H1 (cell line): ENCODE measurements at regions of chr14 and their contacts with region 1.

Region 1: GRCh38 chr14:94748667-94749347 is 21.1 kb downstream of the GSC start:
- DNase-seq: peak in 1 of 2 experiments; percentile 75
- H3K4me3 ChIP-seq: no peak overlapping the region
- H3K27ac ChIP-seq: no peak overlapping the region
- H3K4me1 ChIP-seq: no peaks in the 10 kb centered on the region
- H3K27me3 ChIP-seq: no peaks in the 10 kb centered on the region
- CTCF ChIP-seq: peak; percentile 69 to 94 (median 84)
- EP300 ChIP-seq: no peak
- POLR2A ChIP-seq: no peak
- RAD21 ChIP-seq: peak; percentile 82 to 87

Region 2: GRCh38 chr14:94689218-94689984 is 59.4 kb before region 1 on chr14:
- CTCF ChIA-PET with region 1: interaction called, 40 read pairs
- POLR2A ChIA-PET with region 1: no interaction called
- DNase-seq: peak in 1 of 2 experiments; percentile 92
- H3K4me3 ChIP-seq: peak overlapping the region in 1 of 4 experiments; percentile 48; a peak in 3 of 8 replicates
- H3K27ac ChIP-seq: no peak overlapping the region
- H3K4me1 ChIP-seq: peaks cover 0 to 7% (median 4%) of the 10 kb centered on the region in 4 experiments; a peak in 5 of 7 replicates
- H3K27me3 ChIP-seq: peaks cover 0 to 8% (median 4%) of the 10 kb centered on the region in 4 experiments; a peak in 5 of 7 replicates
- CTCF ChIP-seq: peak; percentile 83 to 94 (median 93)
- EP300 ChIP-seq: no peak
- POLR2A ChIP-seq: no peak
- RAD21 ChIP-seq: peak; percentile 96

Region 3: DNA sequence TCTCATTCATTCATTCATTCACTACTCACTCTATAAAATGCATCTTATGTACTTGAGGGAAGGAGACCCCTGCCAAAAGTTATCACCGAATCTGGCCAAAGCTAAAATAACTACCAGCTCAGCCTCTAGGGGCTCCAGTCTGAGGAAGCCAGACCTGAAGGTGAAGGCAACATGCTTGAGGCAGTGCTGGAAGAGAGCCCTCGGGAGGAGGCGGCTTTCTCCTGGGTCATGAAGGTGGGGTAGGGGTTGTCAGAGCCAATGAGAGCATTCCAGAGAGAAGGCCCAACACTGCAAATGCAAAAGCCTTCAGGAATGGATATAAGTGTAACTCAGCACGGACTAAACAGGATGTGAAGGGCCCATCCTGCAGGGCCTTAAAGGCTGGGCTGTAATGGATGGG is 41.3 kb before region 1 on chr14:
- CTCF ChIA-PET with region 1: interaction called, 16 read pairs
- POLR2A ChIA-PET with region 1: no interaction called
- DNase-seq: peak in 1 of 2 experiments; percentile 54
- H3K4me3 ChIP-seq: no peak overlapping the region
- H3K27ac ChIP-seq: no peak overlapping the region
- H3K4me1 ChIP-seq: no peaks in the 10 kb centered on the region
- H3K27me3 ChIP-seq: no peaks in the 10 kb centered on the region
- CTCF ChIP-seq: peak; percentile 35 to 70 (median 46); a peak in 3 of 4 replicates
- EP300 ChIP-seq: no peak
- POLR2A ChIP-seq: no peak
- RAD21 ChIP-seq: peak; percentile 45 to 51

Region 4: GRCh38 chr14:94738751-94739150 is 10.1 kb before region 1 on chr14:
- CTCF ChIA-PET with region 1: interaction called, 17 read pairs
- POLR2A ChIA-PET with region 1: no interaction called
- DNase-seq: no peak
- H3K4me3 ChIP-seq: no peak overlapping the region
- H3K27ac ChIP-seq: no peak overlapping the region
- H3K4me1 ChIP-seq: no peaks in the 10 kb centered on the region
- H3K27me3 ChIP-seq: no peaks in the 10 kb centered on the region
- CTCF ChIP-seq: no peak
- EP300 ChIP-seq: no peak
- POLR2A ChIP-seq: no peak
- RAD21 ChIP-seq: no peak

Region 5: DNA sequence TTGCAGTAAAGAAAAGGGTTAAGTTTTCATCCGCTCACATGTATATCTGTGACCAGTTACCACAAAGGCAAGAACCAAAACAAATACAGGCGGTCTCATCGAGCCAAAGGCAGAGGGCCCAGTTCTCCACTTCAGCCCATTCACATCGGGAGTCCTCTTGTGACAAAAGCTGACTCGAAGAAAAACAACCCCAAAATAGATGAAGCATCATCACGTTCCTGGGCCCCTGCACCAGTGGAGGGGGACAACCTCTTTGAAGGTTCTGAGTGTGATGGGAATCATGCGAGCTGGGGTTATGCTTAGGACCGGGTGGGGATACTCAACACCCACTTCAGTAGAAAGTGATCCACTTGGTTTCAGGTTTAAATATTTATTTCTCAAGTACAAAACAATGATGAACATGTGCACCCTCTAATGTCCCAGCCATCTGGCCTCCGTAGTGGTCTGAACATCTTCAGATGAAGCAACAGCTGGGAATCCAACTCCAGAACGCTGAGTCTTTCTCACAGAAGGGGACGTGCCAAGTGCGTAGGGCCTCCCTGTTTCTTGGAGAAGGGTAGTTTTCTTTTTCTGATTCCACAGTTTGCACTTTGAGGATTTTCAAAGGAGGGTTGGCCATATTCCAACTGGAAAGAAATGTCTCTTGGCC is 12.7 kb after region 1 on chr14:
- CTCF ChIA-PET with region 1: interaction called, 38 read pairs
- POLR2A ChIA-PET with region 1: no interaction called
- DNase-seq: no peak
- H3K4me3 ChIP-seq: no peak overlapping the region
- H3K27ac ChIP-seq: no peak overlapping the region
- H3K4me1 ChIP-seq: peaks cover 0 to 6% (median 2%) of the 10 kb centered on the region in 4 experiments; a peak in 4 of 7 replicates
- H3K27me3 ChIP-seq: peaks cover 13 to 36% (median 26%) of the 10 kb centered on the region in 4 experiments
- CTCF ChIP-seq: no peak
- EP300 ChIP-seq: no peak
- POLR2A ChIP-seq: no peak
- RAD21 ChIP-seq: no peak

Region 6: DNA sequence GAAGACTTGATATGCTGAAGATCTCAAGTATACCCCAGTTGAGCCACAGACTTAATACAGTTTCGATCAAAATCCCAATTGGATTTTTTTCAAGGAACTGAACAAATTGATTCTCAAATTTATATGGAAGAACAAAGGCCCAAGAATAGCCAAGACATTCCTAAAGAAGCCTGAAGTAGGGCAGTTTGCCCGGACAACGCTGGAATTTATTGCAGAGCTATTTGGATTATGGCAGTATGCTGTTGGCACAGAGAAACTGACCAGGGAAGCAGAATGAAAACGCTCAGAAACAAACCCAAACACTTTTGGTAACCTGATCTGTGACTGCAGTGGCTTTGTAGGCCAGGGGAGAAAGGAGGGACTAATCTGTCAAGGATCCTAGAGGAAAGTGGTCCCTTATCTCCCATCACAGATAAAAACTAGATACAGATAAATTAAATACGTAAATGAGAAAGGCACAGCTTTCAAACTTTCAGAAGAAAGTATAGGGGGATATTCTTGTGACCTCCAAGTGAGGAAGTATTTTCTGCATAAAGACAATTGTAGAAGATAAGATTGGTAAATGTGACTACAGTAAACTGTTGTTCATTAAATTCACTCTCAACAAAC is 57.0 kb after region 1 on chr14:
- CTCF ChIA-PET with region 1: interaction called, 11 read pairs
- POLR2A ChIA-PET with region 1: no interaction called
- DNase-seq: no peak
- H3K4me3 ChIP-seq: no peak overlapping the region
- H3K27ac ChIP-seq: no peak overlapping the region
- H3K4me1 ChIP-seq: no peaks in the 10 kb centered on the region
- H3K27me3 ChIP-seq: no peaks in the 10 kb centered on the region
- CTCF ChIP-seq: no peak
- EP300 ChIP-seq: no peak
- POLR2A ChIP-seq: no peak
- RAD21 ChIP-seq: no peak